Activated CD8-positive, alpha-beta T cell treated with anti-CD3 and anti-CD28 coated beads for 36 hours (primary cell): ENCODE measurements at regions of chr14 and their contacts with region 1.

Region 1: DNA sequence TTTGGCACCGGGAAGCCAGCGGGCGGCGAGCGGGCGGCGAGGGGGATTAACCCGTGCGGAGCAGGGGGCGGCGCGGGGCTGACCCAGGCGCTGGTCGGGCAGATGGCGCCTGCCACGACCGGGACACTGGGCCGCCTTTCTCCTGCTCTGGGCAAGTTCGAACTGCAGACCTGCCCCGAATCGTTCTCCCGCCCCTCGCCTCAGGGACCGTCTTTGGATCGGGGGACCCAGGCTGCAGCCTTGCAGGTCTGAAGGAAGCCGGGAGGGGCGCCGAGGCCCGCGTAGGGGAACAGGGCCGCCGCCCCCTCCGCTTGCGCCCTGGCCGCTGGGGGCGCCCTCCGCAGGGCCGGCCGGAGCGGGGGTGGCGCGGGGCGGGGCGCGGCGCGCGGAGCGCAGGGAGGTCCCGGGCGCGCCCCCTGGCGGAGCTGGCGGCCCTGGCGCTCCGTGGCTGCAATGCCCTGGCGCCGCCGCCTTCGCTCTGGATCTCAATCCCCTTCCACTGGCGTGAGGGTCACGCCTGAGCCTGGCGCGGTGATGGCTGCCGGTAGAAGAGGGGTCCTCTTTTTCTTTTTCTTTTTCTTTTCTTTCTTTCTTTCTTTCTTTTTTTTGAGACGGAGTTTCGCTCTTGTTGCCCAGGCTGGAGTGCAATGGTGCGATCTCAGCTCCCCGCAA is 449 bp upstream of the LTBP2 start:
- DNase-seq: peak; percentile 86
- ATAC-seq: peak; percentile 87
- H3K4me3 Mint-ChIP-seq: peak overlapping the region; percentile 65
- H3K27ac Mint-ChIP-seq: no peak overlapping the region
- H3K4me1 Mint-ChIP-seq: peaks cover 35% of the 10 kb centered on the region
- H3K27me3 Mint-ChIP-seq: peaks cover 15% of the 10 kb centered on the region
- CTCF ChIP-seq: peak; percentile 53

Region 2: GRCh38 chr14:74549588-74549987 is 62.9 kb before region 1 on chr14:
- CTCF ChIA-PET with region 1: no interaction called
- POLR2A ChIA-PET with region 1: no interaction called
- intact Hi-C with region 1: no loop called
- DNase-seq: peak; percentile 13
- ATAC-seq: no peak
- H3K4me3 Mint-ChIP-seq: no peak overlapping the region
- H3K27ac Mint-ChIP-seq: no peak overlapping the region
- H3K4me1 Mint-ChIP-seq: peaks cover 3% of the 10 kb centered on the region
- H3K27me3 Mint-ChIP-seq: no peaks in the 10 kb centered on the region
- CTCF ChIP-seq: no peak

Region 3: DNA sequence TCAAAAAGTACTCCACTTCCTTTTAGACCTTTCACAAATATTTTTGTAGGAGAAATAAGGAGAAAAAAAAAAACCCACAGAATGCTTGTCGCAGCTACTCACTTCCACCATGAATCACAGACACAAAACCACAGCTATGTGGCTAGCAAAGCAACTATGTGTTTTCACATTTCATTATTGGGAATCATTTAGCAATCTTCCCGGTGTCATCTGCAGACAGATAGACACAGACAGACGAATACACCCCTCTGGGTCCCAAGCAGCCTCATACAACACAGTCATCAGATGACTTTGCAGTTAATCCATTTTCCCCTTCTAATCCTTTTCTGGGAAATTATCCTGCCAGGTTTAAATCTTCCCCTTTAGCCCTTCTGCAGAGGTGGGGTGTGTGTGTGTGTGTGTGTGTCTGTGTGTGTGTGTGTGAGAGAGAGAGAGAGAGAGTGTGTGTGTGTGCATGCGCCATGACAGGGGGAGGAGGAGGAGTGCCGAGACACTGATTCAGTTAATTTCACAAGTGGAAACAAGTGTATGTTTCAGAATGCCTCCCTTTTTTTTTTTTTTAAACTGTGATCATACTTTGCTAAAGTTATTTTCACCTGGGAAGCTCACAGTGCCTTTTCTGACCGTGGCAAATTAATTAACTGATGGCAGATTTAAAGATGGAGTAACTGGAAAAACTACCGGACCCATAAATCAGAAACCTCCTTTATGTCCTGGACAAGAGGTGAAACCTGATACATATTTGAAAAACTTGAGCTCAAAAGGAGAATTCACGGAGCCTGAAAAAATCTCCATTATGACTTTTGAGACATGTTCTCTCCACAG is 40.4 kb before region 1 on chr14:
- CTCF ChIA-PET with region 1: interaction called, 10 read pairs
- POLR2A ChIA-PET with region 1: no interaction called
- intact Hi-C with region 1: no loop called
- DNase-seq: peak; percentile 40
- ATAC-seq: peak; percentile 37
- H3K4me3 Mint-ChIP-seq: no peak overlapping the region
- H3K27ac Mint-ChIP-seq: peak overlapping the region; percentile 38
- H3K4me1 Mint-ChIP-seq: peaks cover 37% of the 10 kb centered on the region
- H3K27me3 Mint-ChIP-seq: peaks cover 21% of the 10 kb centered on the region
- CTCF ChIP-seq: no peak

Region 4: GRCh38 chr14:74638066-74638465 is 25.6 kb after region 1 on chr14:
- CTCF ChIA-PET with region 1: interaction called, 17 read pairs
- POLR2A ChIA-PET with region 1: interaction called, 3 read pairs
- intact Hi-C with region 1: no loop called
- DNase-seq: no peak
- ATAC-seq: no peak
- H3K4me3 Mint-ChIP-seq: no peak overlapping the region
- H3K27ac Mint-ChIP-seq: no peak overlapping the region
- H3K4me1 Mint-ChIP-seq: no peaks in the 10 kb centered on the region
- H3K27me3 Mint-ChIP-seq: no peaks in the 10 kb centered on the region
- CTCF ChIP-seq: no peak

Region 5: DNA sequence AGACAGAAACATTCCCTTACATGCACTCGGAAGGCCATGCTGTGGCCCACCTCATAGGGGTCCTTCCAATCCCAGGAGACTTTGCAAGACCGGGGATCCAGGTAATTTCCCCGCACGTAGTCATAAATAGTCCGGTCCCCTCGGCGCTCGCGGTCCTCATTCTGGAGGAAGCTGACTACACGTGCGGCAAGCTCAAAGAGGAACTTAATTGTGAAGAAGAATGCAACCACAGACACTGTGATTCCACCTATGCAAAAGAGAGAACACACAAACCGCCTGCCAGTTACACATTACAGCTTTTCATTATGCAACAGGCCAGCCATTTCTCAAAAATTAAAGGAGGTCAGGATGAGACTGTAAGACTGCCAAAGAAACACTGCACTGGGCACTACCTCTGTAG is 71.9 kb after region 1 on chr14:
- CTCF ChIA-PET with region 1: interaction called, 15 read pairs
- POLR2A ChIA-PET with region 1: interaction called, 3 read pairs
- intact Hi-C with region 1: no loop called
- DNase-seq: peak; percentile 28
- ATAC-seq: peak; percentile 37
- H3K4me3 Mint-ChIP-seq: no peak overlapping the region
- H3K27ac Mint-ChIP-seq: no peak overlapping the region
- H3K4me1 Mint-ChIP-seq: peaks cover 23% of the 10 kb centered on the region
- H3K27me3 Mint-ChIP-seq: no peaks in the 10 kb centered on the region
- CTCF ChIP-seq: no peak

Region 6: DNA sequence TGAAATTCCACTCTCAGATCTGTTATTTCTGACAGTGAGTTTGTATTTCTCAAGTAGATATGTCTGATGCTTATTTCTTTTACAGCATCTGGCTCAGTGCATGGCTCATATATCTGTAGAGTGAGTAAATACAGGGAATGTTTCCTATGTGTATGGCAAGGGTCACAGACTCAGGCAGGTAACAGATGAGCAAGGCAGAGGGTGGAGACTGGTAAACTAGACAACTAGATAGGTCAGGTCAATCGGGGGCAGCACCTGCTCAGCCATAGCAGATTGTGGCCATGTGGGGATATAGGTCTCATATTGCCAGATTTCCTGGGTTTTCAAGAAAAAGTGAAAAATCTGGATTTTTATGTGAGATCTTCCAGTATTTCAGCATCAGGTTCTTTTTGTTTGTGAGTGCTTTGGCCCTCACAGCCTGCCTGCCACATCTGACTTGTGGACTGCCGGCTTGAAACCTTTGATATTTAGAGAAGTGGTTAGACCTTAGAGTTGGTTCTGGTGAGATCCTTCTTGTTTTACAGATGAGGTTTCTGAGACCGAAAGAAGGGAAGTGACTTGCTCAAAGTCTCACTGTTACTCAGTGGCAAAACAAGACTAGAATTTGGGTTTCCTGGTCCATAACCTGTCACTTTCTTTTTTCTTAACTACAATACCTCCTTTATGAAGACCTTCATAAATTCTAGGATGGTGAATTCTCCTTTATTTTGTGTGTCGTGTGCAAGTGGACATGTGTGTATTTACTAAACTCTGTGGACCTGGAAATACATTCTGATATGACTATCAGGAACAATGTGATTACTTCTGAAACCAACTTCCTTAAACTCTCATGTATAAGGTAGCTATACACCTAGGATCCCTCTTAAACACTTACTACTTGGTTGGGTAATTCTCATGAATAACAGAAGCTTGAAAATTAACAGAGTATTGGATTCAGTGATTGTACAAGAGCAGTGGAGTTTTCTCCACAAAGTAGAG is 229.0 kb after region 1 on chr14:
- CTCF ChIA-PET with region 1: interaction called, 4 read pairs
- POLR2A ChIA-PET with region 1: no interaction called
- intact Hi-C with region 1: loop called (anchors 10 kb)
- DNase-seq: peak; percentile 56
- ATAC-seq: peak; percentile 78
- H3K4me3 Mint-ChIP-seq: peak overlapping the region; percentile 0
- H3K27ac Mint-ChIP-seq: peak overlapping the region; percentile 60
- H3K4me1 Mint-ChIP-seq: peaks cover 64% of the 10 kb centered on the region
- H3K27me3 Mint-ChIP-seq: no peaks in the 10 kb centered on the region
- CTCF ChIP-seq: no peak